GM12878 (cell line): ENCODE measurements at regions of chr6 and their contacts with region 1.

Region 1: DNA sequence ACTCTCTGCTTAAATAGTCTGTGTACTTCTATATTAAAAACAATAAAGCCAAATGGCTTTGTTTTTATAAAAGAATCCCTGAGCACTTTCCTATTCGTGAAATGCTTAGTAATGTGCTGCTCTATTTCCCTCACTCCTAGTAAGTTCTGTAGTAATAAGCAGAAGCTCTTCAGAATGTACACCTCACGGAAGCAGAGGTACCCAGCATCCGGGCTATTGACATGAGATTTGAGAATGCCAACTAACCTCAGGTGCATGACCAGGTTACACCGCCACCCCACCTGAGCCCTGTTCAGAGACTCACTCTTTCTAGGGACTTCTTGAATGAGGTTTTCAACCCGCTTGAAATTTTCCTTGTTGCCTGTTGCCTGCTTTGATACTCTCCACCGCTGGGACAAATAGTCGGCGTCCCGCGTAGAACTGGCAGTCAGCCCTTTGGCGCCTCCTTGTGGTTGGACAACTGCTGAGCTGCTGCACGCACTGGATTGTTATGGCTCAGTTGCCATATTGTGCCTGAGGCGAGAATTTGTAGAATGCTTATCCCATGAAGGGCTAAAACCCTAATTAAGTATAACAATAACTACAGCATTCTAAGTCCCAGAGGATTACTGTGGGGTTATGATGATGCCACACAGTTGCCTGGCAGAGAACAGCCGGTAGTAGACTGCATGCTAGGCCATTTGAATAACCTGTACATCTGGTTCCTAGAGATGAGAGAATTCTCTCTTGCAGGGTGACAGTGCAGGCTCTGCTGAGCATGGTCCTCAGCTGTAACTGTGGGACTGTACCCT is 95.4 kb downstream of the KHDC1L start:
- DNase-seq: peak; percentile 39
- ATAC-seq: peak; percentile 99
- H3K4me3 ChIP-seq: no peak overlapping the region
- H3K27ac ChIP-seq: no peak overlapping the region
- H3K4me1 ChIP-seq: no peaks in the 10 kb centered on the region
- H3K27me3 ChIP-seq: no peaks in the 10 kb centered on the region
- CTCF ChIP-seq: peak; percentile 95 to 99 (median 96)
- EP300 ChIP-seq: no peak
- POLR2A ChIP-seq: no peak
- RAD21 ChIP-seq: peak; percentile 99

Region 2: DNA sequence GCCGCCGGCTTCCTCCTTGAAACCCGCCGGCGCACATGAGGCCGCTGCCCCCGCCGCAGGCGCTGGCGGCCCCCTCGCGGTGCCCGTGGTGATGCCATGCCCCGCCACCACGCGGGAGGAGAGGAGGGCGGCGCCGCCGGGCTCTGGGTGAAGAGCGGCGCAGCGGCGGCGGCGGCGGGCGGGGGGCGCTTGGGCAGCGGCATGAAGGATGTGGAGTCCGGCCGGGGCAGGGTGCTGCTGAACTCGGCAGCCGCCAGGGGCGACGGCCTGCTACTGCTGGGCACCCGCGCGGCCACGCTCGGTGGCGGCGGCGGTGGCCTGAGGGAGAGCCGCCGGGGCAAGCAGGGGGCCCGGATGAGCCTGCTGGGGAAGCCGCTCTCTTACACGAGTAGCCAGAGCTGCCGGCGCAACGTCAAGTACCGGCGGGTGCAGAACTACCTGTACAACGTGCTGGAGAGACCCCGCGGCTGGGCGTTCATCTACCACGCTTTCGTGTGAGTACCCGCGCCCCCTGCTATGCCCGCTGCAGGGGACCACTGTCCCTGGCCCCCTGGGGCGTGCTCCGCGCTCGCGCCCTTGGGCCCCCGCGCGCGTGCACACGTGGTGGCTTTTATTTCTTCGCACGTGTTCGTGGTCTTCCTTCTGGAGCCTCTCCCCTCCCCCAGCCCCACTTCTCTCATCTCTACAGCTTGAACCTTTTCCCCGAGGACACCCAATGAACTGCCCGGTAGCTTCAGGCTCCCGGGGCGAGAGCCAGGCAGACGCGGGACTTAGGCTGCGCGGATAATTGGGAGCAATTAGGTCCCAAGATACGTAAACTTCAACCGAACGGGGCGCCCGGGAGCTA is 507.5 kb before region 1 on chr6:
- CTCF ChIA-PET with region 1: interaction called, 644 read pairs
- POLR2A ChIA-PET with region 1: interaction called, 10 read pairs
- RAD21 ChIA-PET with region 1: interaction called, 436 read pairs
- SMC1A ChIA-PET with region 1: interaction called, 446 read pairs
- in situ Hi-C with region 1: loop called (anchors 5 kb)
- intact Hi-C with region 1: loop called (anchors 1 kb)
- DNase-seq: no peak
- ATAC-seq: peak; percentile 52
- H3K4me3 ChIP-seq: peak overlapping the region; percentile 100
- H3K27ac ChIP-seq: peak overlapping the region; percentile 89
- H3K4me1 ChIP-seq: peaks cover 27% of the 10 kb centered on the region
- H3K27me3 ChIP-seq: no peaks in the 10 kb centered on the region
- CTCF ChIP-seq: peak; percentile 7 to 34 (median 22); a peak in 3 of 6 replicates
- EP300 ChIP-seq: no peak
- POLR2A ChIP-seq: peak; percentile 59
- RAD21 ChIP-seq: 0 out of 2 replicates have a peak, but pooled peaks have one; percentile 5

Region 3: GRCh38 chr6:72689107-72689954 is 440.5 kb before region 1 on chr6:
- CTCF ChIA-PET with region 1: interaction called, 8 read pairs
- POLR2A ChIA-PET with region 1: no interaction called
- RAD21 ChIA-PET with region 1: interaction called, 13 read pairs
- SMC1A ChIA-PET with region 1: interaction called, 10 read pairs
- in situ Hi-C with region 1: no loop called
- intact Hi-C with region 1: loop called (anchors 5 kb)
- DNase-seq: peak; percentile 96
- ATAC-seq: peak; percentile 94
- H3K4me3 ChIP-seq: peak overlapping the region; percentile 63
- H3K27ac ChIP-seq: peak overlapping the region; percentile 100
- H3K4me1 ChIP-seq: peaks cover 16% of the 10 kb centered on the region
- H3K27me3 ChIP-seq: no peaks in the 10 kb centered on the region
- CTCF ChIP-seq: no peak
- EP300 ChIP-seq: peak; percentile 89 to 93; a peak in 3 of 4 replicates
- POLR2A ChIP-seq: no peak; the same call in 1 of the 2 replicates
- RAD21 ChIP-seq: peak; percentile 38

Region 4: GRCh38 chr6:73109659-73110058 is 20.2 kb before region 1 on chr6:
- CTCF ChIA-PET with region 1: interaction called, 17 read pairs
- POLR2A ChIA-PET with region 1: no interaction called
- RAD21 ChIA-PET with region 1: interaction called, 3 read pairs
- SMC1A ChIA-PET with region 1: interaction called, 8 read pairs
- in situ Hi-C with region 1: no loop called
- intact Hi-C with region 1: no loop called
- DNase-seq: no peak
- ATAC-seq: no peak
- H3K4me3 ChIP-seq: no peak overlapping the region
- H3K27ac ChIP-seq: no peak overlapping the region
- H3K4me1 ChIP-seq: no peaks in the 10 kb centered on the region
- H3K27me3 ChIP-seq: no peaks in the 10 kb centered on the region
- CTCF ChIP-seq: no peak
- EP300 ChIP-seq: no peak
- POLR2A ChIP-seq: no peak
- RAD21 ChIP-seq: no peak

Region 5: DNA sequence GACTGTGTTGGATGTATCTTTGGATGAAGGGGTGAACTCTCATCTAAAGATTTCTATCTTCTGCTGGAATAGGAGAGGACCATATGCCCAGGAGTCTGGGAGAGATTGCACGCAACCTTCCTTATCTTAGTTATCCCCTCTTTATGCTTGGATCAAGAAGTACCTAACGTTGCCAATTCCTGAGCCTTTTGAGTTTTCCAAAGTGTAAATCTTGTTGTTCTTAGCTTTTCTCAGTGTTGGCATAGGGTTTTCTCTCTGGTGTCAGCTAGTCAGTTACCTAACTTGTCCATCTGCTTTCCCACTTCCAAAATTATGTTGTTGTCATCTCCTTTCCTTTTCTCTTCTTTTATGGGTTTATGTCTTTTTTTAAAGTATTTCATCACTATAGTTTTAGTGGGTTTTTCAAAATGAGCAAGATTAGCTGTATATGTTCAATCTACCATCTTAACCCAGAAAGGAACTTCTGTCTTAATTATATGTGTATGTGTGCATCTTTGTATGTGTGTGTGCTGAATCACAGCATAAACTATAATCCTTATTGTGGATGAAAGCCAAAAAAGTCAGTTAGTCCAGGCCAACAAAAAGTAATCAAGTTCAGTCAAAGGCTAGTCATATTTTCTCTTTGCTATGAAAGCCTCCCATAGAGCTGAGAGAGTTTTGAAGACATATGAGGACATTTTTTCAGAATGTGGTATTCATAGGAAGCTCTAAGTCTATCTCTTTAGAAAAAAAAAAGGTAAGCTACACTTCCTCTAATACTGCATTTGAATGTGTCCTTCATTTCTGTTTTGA is 23.3 kb after region 1 on chr6:
- CTCF ChIA-PET with region 1: interaction called, 22 read pairs
- POLR2A ChIA-PET with region 1: no interaction called
- RAD21 ChIA-PET with region 1: interaction called, 4 read pairs
- SMC1A ChIA-PET with region 1: interaction called, 5 read pairs
- in situ Hi-C with region 1: no loop called
- intact Hi-C with region 1: no loop called
- DNase-seq: no peak
- ATAC-seq: no peak
- H3K4me3 ChIP-seq: no peak overlapping the region
- H3K27ac ChIP-seq: no peak overlapping the region
- H3K4me1 ChIP-seq: peaks cover 4% of the 10 kb centered on the region; the same call in 1 of the 2 replicates
- H3K27me3 ChIP-seq: no peaks in the 10 kb centered on the region
- CTCF ChIP-seq: no peak
- EP300 ChIP-seq: no peak
- POLR2A ChIP-seq: no peak
- RAD21 ChIP-seq: no peak